BJ (cell line): ENCODE measurements at regions of chr6 and their contacts with region 1.

Region 1: DNA sequence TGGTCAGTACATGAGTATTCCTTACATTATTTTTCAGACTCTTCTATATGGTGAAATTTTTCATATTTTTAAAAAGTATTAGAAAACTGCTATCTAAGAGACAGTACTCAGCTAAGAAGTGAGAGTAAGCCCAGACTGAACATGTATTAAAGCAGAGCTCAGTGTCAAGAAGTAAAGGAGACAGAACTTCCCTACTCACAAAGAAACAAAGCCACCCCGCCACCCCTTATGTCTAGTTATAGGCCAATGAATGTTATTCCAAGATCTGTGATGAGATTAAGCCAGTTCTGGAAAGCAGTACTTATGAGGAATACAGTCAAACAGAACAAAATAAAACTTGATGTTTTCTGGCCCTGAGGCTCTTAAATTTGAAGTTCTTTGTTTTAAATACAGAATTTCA is 114.5 kb downstream of the RNGTT start:
- DNase-seq: no peak
- H3K4me3 ChIP-seq: no peak overlapping the region
- H3K27me3 ChIP-seq: no peaks in the 10 kb centered on the region
- CTCF ChIP-seq: no peak

Region 2: GRCh38 chr6:88698661-88699060 is 150.2 kb before region 1 on chr6:
- CTCF ChIA-PET with region 1: no interaction called
- POLR2A ChIA-PET with region 1: no interaction called
- DNase-seq: no peak
- H3K4me3 ChIP-seq: no peak overlapping the region
- H3K27me3 ChIP-seq: no peaks in the 10 kb centered on the region
- CTCF ChIP-seq: no peak

Region 3: GRCh38 chr6:88882536-88882935 is 33.7 kb after region 1 on chr6:
- CTCF ChIA-PET with region 1: no interaction called
- POLR2A ChIA-PET with region 1: interaction called, 11 read pairs
- DNase-seq: no peak
- H3K4me3 ChIP-seq: no peak overlapping the region
- H3K27me3 ChIP-seq: no peaks in the 10 kb centered on the region
- CTCF ChIP-seq: no peak